Motor neuron (in vitro differentiated cells): ENCODE measurements at regions of chr12 and their contacts with region 1.

Region 1: GRCh38 chr12:14257734-14258574 is 107.5 kb upstream of the ATF7IP start:
- ATAC-seq: peak; percentile 27 to 85 (median 58)
- H3K4me3 ChIP-seq: no peak overlapping the region
- H3K27ac ChIP-seq: peak overlapping the region; percentile 69 to 72
- H3K4me1 ChIP-seq: peaks cover 31 to 32% of the 10 kb centered on the region in 2 donors

Region 2: GRCh38 chr12:14365294-14366208 is 107.6 kb after region 1 on chr12 and contains the start of gene ATF7IP:
- in situ Hi-C with region 1: loop called in 3 of 9 experiments (anchors 10 to 25 kb)
- ATAC-seq: peak; percentile 91 to 96 (median 96)
- H3K4me3 ChIP-seq: peak within 1 kb of the TSS; percentile 55 to 82 (median 68)
- H3K27ac ChIP-seq: peak within 1 kb of the TSS; percentile 93 to 97
- H3K4me1 ChIP-seq: no peaks in the 10 kb centered on the region
- total RNA-seq, gene ATF7IP: 26.8 to 63.2 (median 47.2) TPM